ENCODE measurements at regions of chr9 and their contacts with region 1.

Region 1: DNA sequence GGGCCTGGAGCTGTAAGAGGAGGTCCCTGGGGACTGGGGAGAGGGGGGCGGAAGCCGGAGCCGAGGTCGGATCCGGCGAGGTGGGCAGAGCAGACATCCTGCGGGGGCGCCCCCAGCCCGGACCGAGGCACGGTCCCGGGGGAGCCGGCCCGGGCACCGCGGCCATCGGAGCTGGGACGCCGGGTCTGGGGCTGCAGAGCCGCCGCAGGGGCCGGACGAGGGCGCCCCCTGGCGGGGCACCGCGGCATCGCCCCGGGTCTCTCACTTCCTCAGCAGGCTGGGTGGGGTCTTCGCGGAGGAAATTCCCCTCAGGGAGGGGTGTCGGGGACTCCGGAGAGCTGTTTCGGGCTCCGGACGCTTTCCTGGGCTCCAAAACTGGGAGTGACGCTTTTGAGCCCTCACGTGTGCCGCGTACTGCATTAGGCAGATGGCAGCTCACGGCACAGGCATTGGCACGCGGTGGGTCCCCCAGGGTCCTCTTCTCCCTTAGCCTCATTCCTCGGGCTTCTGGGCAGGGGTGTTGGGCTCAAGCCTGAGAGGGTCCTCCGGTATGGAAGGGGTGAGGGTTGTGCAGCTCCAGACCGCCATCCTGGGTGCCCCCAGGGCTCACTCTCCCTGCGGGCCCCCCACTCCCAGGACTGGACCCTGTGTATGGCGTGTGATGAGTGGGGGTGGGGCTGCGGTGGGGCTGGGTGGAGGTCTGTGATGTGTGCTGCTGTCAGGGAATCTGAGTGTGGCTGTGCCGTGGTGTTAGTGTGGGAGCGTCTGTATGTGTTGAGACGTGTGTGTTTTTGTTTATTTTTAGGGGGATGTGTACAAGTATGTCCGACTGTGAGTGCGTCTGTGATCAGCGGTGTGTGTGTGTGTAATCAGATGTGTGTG is 29.6 kb downstream of the LHX2 start:
- DNase-seq: no peak
- H3K4me3 ChIP-seq: peak overlapping the region; percentile 35
- H3K27me3 ChIP-seq: peaks cover 23% of the 10 kb centered on the region
- CTCF ChIP-seq: peak; percentile 88

Region 2: DNA sequence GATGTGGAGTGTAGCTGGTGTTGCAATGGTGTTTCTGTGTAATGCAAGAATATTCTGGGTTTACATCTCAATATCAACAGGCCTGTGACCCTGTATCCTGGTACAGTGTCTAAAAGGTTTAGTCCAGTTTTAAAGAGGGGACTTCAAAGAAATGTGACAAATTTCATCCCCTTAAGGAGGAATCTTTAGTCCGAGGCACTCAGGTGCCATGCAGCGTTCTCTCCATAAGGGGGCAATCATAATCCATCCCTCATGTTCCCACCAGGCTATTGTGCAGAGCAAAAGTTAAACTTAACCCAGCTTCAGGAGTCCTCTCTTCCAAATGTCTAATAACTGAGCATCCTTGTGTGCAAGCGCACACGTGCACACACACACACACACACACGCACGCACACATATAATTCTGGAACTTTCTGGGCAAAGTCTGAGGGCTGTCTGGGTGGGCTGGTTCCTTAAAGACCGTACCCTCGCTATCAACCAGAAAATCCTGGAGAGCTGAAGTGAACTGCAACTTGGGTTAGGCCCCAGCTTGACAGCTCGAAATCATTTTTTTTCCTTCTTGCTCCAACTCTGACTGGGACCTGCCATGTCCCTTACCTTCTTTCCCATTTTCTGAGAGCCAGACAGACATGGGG is 639.2 kb before region 1 on chr9:
- CTCF ChIA-PET with region 1: interaction called, 12 read pairs
- POLR2A ChIA-PET with region 1: no interaction called
- DNase-seq: peak; percentile 4
- H3K4me3 ChIP-seq: no peak overlapping the region
- H3K27me3 ChIP-seq: no peaks in the 10 kb centered on the region
- CTCF ChIP-seq: peak; percentile 83

Region 3: DNA sequence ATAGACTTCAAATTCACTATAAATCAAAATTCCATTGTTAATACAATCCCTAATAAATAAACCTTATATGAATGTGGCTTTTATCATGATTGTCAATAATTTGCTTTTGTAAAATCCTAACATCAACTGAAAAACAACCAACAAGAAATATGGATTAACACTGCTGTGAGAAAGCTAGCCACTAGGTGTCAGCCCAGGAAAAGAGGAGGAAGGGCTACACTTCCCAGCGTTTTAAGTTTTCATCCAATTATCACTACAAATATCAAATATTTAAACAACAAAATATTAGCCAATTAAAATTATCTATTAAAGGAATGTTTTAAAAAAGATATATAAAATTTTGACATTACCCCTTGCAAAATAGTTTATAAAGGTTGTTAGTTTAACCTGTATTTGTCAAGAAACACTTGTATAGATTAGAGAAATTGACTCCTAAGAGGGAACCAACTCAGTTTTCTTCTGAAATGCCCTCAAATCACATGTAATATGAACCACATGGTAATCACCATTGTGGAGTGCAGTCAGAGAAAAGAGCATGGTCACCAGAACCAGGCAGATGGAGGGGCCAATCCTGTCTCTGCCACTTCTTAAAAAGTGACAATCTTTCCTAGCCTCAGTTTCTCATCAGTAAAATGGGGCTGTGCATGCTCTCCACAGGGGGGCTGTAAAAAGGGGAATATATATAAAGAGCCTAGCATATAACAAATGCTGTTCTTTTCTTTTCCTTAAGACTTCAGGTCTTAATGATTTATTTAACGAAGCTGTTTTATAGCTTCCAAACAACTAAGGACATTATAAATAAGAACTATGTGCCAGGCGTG is 497.0 kb before region 1 on chr9:
- CTCF ChIA-PET with region 1: interaction called, 95 read pairs
- POLR2A ChIA-PET with region 1: no interaction called
- DNase-seq: no peak
- H3K4me3 ChIP-seq: no peak overlapping the region
- H3K27me3 ChIP-seq: no peaks in the 10 kb centered on the region
- CTCF ChIP-seq: peak; percentile 80

Region 4: DNA sequence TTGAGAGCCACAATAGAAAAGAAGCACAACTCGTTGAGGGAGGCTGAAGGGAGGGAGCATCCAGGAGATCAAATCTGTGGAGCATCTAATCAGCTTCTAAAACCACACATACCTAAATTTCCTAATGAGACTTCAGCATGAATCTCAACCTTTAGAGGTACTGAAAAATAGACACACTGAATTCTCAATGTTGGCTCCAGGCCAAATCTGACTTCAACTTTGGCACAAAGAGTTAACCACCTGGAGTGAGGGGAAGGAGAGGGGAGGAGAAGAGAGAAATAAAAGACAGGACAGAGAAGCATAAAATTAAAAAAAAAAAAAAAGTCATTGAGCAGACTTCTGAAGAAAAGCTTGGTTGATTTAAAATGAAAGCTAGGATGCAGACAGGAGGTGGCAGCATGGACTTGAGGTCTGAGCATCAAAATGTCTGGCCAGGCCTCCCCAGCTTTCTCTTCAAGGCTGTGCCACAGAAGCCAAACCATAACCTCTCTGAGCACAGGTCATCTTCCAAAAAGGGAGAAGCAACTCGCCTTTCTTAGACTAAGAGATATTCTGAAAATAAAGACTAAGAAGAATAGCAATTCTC is 316.9 kb before region 1 on chr9:
- CTCF ChIA-PET with region 1: interaction called, 46 read pairs
- POLR2A ChIA-PET with region 1: interaction called, 10 read pairs
- DNase-seq: no peak
- H3K4me3 ChIP-seq: no peak overlapping the region
- H3K27me3 ChIP-seq: no peaks in the 10 kb centered on the region
- CTCF ChIP-seq: peak; percentile 35

Region 5: DNA sequence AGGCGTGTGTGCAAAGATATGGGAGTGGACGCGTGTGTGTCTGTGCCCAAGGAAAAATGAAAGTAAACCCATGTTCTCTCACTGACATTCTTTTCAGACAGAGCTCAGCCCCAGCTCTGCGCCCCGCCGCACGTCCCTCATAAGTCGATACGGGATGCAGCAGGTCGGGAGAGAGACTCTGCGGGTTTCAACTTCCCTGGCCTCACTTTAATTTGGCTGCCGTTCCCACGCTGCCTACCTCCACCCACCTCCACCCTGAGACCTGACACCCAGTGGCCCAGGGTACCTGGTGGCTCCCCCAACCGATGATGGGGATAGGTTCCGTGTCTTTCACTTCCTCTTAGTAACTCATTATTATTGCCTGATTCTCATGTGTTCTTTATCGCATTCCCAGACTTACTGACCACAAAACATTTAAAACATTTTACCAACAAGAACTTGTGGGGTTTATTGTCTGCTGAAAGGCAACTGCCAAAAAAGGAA is 10.2 kb before region 1 on chr9:
- CTCF ChIA-PET with region 1: interaction called, 17 read pairs
- POLR2A ChIA-PET with region 1: no interaction called
- DNase-seq: peak; percentile 69
- H3K4me3 ChIP-seq: peak overlapping the region; percentile 54
- H3K27me3 ChIP-seq: no peaks in the 10 kb centered on the region; the same call in 1 of the 2 replicates
- CTCF ChIP-seq: 0 out of 2 replicates have a peak, but pooled peaks have one; percentile 2

Region 6: DNA sequence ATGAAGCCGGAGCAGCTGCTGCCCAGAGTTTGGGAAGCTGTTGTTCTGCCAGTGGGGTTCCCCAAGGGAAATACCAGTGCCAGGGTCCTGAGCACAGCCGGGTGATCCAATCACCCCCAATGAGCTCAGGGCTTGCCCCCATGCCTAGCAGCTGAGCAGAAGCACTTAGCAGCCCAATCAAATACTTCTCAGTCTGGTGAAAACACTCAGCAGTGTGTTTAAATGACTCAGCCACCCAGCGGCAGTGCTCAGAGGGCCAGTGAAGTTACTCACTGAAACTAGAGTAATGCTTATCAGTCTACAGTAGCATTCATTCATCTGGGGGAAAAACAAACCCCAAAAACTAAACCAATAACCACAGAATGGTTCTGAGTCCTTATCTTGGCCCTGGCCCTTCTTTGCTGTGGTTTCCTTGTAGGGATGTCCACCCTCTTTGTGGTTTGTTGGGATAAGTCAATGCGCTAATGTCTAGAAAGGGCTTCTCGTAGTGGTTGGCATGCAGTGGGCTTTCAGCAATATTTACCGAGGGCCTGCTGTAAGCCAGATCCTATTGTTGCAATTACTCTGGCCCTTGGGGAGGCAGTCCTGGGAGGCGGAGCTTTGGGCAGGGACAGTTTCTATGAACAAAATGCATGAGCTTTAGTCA is 13.5 kb after region 1 on chr9:
- CTCF ChIA-PET with region 1: interaction called, 68 read pairs
- POLR2A ChIA-PET with region 1: no interaction called
- DNase-seq: peak; percentile 41
- H3K4me3 ChIP-seq: no peak overlapping the region
- H3K27me3 ChIP-seq: peaks cover 8% of the 10 kb centered on the region
- CTCF ChIP-seq: 0 out of 2 replicates have a peak, but pooled peaks have one; percentile 21

Region 7: GRCh38 chr9:124079176-124079925 is 38.2 kb after region 1 on chr9:
- CTCF ChIA-PET with region 1: no interaction called
- POLR2A ChIA-PET with region 1: no interaction called
- DNase-seq: no peak
- H3K4me3 ChIP-seq: no peak overlapping the region
- H3K27me3 ChIP-seq: no peaks in the 10 kb centered on the region; the same call in 1 of the 2 replicates
- CTCF ChIP-seq: no peak

Region 8: DNA sequence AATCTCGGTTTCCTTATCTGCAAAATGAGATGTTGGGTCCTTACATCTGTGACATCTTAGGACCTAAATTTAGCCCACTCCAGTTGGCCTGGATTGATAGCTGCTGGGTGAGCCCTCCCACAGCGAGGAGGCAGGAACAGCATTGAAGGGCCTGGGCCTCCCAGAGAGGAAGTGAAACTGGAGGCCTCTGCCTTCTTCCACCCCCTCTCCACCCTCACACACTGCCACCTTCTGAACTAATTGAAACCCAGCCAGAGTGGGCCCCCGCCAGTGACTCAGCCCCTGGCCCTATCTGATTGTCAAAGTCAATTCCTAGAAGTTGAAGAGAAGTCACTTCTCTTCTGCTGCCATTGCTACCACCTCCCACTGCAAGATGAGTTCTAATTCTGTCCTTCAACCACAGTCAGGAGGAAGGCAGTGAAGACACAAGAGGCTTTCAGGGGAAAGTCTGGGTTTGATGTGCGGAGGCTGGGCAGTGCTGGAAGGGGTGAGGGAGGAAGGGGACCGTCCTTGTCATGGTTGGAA is 161.3 kb after region 1 on chr9:
- CTCF ChIA-PET with region 1: no interaction called
- POLR2A ChIA-PET with region 1: no interaction called
- DNase-seq: no peak
- H3K4me3 ChIP-seq: no peak overlapping the region
- H3K27me3 ChIP-seq: peaks cover 2% of the 10 kb centered on the region
- CTCF ChIP-seq: no peak